AG04449 (cell line): ENCODE measurements at regions of chr11 and their contacts with region 1.

Region 1: DNA sequence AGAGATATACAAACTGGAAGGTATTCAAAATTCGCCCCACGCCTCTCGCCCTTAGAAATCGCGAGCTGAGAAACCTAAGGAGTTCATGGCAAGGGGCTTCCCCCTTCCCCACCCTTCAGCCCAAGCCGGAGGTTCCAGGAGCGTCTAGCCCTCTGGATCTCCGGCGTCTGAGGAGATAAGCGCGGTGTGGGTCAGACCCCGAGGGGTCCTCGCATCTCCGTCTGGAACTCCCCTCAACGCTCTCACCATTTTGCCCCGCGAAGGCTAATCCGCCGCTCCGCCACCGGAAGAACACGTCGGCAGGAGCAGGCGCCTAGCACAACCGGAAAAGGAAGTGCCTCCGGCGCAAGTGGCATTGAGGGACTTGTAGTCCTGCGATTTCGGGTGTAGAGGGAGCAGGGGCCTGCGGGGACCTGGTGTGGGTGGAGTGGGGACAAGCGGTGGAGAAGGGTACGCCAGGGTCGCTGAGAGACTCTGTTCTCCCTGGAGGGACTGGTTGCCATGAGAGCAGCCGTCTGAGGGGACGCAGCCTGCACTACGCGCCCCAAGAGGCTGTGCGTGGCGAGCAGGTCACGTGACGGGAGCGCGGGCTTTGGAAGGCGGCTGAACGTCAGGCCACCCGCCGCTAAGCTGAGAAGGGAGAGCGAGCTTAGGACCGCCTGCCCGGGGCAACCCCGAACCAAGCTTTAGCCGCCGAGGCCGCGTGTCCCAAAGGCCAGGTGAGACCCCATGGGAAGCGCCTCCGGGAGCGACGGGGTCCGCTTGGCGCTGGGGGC is at the starts of genes FEN1 and TMEM258:
- DNase-seq: peak; percentile 75
- H3K4me3 ChIP-seq: peak within 1 kb of the TSS; percentile 98
- CTCF ChIP-seq: no peak

Region 2: GRCh38 chr11:61609980-61610366 is 182.5 kb before region 1 on chr11:
- CTCF ChIA-PET with region 1: no interaction called
- POLR2A ChIA-PET with region 1: no interaction called
- DNase-seq: no peak
- H3K4me3 ChIP-seq: no peak overlapping the region
- CTCF ChIP-seq: no peak

Region 3: GRCh38 chr11:61747192-61747966 is 45.1 kb before region 1 on chr11:
- CTCF ChIA-PET with region 1: interaction called, 151 read pairs
- POLR2A ChIA-PET with region 1: interaction called, 3 read pairs
- DNase-seq: no peak
- H3K4me3 ChIP-seq: no peak overlapping the region
- CTCF ChIP-seq: peak; percentile 97

Region 4: DNA sequence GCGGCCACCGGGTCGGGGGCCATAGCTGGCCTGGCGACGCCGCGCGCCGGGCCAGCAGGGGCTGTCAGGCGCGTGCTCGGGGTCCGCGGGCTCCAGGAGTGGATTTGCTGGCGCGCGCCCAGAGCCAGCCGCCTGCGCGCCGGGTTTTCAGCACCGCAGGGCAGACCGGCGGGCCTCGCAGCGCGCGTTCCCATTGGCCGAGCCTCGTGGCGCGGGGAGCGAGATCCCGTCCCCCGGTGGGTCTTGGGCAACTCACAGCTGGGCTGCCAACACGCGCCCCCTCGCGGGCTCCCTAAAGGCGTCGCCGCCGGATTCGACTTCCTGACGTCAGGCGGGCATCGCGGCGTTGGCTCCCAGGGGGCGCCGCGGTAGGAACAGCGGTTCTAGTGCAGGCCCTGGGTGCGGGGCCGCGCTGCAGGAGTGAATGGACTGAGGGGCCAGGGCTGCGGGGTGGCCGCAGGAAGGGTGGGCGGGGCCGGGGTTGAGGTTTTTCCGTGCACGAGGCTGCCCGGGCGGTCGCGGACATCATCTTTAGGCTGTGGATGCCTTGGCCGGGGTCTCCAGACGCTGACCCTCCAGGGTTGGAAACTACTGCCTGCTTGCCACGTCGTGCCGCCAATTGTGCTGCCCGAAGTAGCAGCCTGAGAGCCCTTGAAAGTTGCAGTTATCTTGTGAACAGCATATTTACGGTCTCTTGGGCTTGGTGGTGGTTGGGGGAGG is 24.4 kb after region 1 on chr11 and contains the start of gene FADS1:
- CTCF ChIA-PET with region 1: interaction called, 91 read pairs
- POLR2A ChIA-PET with region 1: interaction called, 13 read pairs
- DNase-seq: peak; percentile 60
- H3K4me3 ChIP-seq: peak within 1 kb of the TSS; percentile 82
- CTCF ChIP-seq: peak; percentile 89

Region 5: DNA sequence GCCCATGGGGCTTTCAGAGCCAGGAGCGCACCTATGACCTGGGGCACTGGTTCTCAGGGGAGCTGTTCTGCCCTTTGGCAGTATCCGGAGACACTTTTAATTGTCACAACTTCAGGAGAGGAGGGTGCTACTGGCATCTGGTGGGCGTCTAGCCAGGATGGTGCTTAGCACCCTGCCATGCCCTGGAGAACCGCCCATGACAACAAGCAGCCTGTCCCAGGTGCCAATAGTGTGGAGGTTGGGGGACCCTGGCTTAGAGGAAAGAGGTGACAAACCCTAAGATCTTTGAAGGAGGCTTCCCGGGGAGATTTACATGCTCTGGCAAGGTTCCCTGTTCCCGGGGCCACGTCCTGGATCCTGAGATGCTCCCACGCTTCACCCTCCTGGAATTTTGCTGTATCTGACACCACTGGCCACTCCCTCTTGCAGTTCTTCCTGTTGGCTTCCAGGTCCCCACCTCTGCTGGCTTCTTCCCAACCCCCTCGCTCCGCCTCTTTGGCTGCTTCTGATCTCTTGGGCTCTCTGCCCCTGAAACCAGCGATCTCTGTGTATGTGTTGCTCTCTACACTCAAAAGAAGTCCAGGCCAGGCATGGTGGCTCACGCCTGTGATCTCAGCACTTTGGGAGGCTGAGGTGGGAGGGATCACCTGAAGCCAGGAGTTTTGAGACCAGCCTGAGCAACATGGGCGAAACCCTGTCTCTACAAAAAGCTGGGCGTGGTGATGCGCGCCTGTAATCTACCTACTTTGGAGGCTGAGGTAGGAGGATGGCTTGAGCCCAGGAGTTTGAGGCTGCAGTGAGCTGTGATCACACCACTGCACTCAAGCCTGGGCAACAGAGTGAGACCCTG is 67.8 kb after region 1 on chr11:
- CTCF ChIA-PET with region 1: interaction called, 12 read pairs
- POLR2A ChIA-PET with region 1: no interaction called
- DNase-seq: no peak
- H3K4me3 ChIP-seq: no peak overlapping the region
- CTCF ChIP-seq: no peak

Region 6: DNA sequence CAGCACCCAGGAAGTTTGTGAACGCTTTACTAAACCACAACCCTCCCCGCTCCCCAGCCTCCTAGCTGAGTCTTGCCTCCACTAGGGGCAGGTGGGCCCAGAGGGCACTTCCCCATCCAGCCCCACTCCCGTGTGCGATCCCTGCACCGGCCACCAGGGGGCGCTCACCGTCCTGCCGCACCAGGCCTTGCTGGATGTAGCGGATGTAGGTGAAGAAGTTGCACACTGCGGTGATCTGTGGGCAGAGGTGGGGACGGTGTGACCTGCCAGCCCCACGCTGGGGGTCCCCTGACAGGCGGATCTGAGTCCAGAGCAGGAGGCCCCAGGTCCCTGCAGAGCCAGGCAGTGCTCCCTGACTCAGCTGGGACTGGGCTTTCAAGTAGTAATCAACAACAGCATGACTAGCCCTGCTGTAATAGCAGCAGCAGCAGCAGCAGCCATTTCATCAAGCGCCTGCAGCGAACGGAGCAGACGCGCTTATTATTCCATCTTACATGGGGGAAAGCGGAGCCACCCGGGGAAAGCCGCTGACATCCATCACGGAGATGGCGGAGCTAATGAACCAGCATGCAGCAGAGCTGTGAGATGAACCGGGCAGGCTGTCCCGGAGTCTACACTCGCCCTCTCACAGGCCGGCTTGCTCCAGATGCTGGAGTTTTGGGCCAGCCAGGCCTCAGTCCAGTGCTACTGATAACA is 106.8 kb after region 1 on chr11:
- CTCF ChIA-PET with region 1: interaction called, 98 read pairs
- POLR2A ChIA-PET with region 1: no interaction called
- DNase-seq: no peak
- H3K4me3 ChIP-seq: no peak overlapping the region
- CTCF ChIP-seq: peak; percentile 99

Region 7: DNA sequence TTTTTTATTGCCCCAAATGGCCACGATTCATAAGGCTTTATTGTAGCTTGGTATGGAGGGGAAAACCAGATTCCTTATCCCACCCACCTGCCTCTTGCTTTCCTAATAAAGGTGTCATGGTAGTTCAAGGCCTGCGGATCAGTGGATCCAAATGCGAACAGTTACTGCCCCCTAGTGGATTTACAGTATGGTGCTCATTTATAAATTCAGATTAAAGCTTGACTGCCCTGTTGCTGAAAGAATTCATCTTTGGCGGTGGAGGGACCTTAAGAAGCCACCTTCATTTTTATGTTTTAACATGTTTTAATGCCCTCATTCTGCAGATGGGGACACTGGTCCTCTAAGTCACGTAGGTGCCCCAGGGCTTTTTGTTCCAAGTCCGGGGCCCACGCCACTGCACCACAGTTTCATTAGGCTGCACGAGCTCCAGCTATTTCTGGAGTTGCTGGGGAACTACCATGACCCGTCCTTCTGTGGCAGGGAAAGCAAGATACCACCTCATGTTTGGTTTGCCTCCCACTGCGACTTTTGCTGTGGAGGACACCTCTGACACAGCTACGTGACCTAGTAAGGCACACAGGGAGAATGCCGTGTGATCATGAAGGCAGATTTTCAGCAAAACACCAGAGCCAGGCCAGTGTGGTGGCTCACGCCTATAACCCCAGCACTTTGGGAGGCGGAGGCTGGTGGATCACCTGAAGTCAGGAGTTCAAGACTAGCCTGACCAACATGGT is 315.7 kb after region 1 on chr11:
- CTCF ChIA-PET with region 1: interaction called, 297 read pairs
- POLR2A ChIA-PET with region 1: interaction called, 3 read pairs
- DNase-seq: no peak
- H3K4me3 ChIP-seq: no peak overlapping the region
- CTCF ChIP-seq: peak; percentile 53

Region 8: GRCh38 chr11:62372871-62373270 is 580.4 kb after region 1 on chr11:
- CTCF ChIA-PET with region 1: interaction called, 16 read pairs
- POLR2A ChIA-PET with region 1: no interaction called
- DNase-seq: no peak
- H3K4me3 ChIP-seq: no peak overlapping the region
- CTCF ChIP-seq: no peak